ENCODE measurements at regions of chr12 and their contacts with region 1.

Region 1: DNA sequence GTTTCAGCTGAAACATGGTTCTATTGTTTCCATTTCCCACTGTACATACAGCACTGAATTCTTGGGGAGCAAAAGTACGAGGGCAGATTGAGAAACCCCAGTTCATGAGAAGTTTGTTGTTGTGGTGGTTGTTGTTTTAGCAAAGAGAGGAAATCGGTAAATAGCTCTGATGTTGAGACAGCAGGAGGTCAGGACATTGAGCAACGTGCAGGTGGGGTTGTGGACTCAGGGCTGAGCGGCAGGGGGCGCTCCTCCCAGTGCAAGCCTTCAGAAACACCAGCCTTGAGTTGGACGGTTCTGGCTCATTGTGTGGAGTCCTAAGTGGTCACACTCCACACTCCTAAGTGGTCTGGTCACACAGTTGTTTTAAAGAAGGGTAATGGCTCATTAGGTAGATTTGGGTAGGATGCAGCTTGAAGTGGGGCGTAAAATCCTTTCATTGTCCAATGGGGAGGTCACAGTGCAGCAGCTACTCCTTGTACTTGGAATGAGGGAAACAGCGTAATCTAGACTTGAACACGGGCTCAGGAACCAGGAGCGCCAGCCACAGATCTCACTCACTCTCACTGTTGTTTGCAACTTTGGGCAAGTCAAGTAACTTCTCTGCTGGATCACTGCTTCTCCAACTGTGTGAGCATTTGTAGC is 14.5 kb upstream of the PWP1 start:
- DNase-seq: no peak
- H3K4me3 ChIP-seq: no peak overlapping the region
- H3K27ac ChIP-seq: no peak overlapping the region
- H3K4me1 ChIP-seq: no peaks in the 10 kb centered on the region
- H3K27me3 ChIP-seq: no peaks in the 10 kb centered on the region
- CTCF ChIP-seq: no peak
- POLR2A ChIP-seq: no peak

Region 2: GRCh38 chr12:107884769-107885694 is 213.9 kb after region 1 on chr12:
- intact Hi-C with region 1: loop called (anchors 10 kb)
- DNase-seq: peak; percentile 38
- H3K4me3 ChIP-seq: no peak overlapping the region
- H3K27ac ChIP-seq: no peak overlapping the region
- H3K4me1 ChIP-seq: no peaks in the 10 kb centered on the region
- H3K27me3 ChIP-seq: no peaks in the 10 kb centered on the region
- CTCF ChIP-seq: peak; percentile 11 to 78 (median 62)
- POLR2A ChIP-seq: no peak